Heart left ventricle (tissue), 16 donors: ENCODE measurements at regions of chr15 and their contacts with region 1.

Region 1: DNA sequence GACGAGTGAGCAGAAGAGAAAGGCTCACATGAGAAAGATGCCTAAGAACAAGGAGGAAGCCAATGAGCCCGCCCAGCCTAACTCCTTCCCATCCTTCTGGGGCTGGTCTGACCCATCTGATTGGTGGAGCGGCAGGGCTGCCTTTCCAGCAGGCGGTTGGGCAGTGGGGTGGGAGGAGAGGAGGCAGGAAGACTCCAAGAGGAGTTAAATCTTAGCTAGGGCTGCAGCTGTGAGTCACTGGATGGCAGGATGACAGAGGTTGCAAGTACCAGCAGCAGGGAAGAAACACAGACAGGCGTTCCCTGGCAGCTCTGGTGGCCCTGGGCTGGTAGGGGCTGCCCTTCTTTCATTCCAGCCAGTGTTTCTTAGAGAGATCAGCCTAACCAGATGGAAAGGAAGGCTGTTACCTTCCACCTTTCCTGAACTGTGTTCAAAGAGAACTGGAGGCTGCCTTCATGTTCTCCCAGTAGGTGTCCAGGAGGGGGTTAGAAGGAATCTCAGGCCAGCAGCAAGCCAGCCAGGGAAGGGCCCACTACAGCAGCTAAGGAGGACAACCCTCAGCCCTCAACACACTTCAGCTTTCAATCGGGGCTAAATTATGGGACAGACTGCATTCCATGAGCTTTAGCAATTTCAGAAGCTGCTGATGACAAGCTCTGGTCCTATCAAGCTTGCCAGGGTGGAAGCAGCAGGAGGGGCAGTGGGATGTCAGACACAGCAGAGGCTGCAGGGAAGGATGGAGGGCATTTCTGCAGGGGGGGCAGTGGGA is 50.3 kb downstream of the CHSY1 start:
- DNase-seq: peak; percentile 84 to 93 (median 91)
- ATAC-seq: peak; percentile 89 to 96 (median 94)
- H3K4me3 ChIP-seq: no peak overlapping the region
- H3K27ac ChIP-seq: peak overlapping the region in 9 of 12 donors; percentile 37 to 85 (median 58)
- H3K4me1 ChIP-seq: peaks cover 3 to 86% (median 57%) of the 10 kb centered on the region in 12 donors
- H3K27me3 ChIP-seq: no peaks in the 10 kb centered on the region
- CTCF ChIP-seq: no peak
- POLR2A ChIP-seq: peak in 1 of 2 donors; percentile 49

Region 2: DNA sequence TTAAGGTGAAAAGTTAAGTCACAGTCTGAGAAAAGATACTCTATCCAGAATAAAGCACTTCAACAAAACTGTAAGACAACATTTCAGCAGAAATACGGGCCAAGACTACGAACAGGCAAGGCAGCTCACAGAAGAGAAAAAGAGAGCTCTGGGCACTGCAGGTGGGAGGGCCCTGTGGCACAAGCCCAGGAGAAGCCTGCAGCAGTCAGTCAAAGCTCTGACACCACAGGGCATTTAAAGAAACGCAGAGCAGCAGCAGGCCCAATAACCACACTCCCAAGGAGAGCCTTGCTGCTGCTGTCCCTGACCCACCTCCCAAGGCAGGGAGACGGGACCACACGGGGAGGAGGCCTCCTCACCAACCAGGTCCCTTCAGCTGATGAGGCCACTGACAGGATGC is 31.1 kb after region 1 on chr15:
- intact Hi-C with region 1: loop called in 1 of 10 experiments (anchors 5 kb)
- DNase-seq: no peak
- ATAC-seq: peak; percentile 61 to 93 (median 84)
- H3K4me3 ChIP-seq: no peak overlapping the region
- H3K27ac ChIP-seq: peak overlapping the region in 1 of 12 donors; percentile 9
- H3K4me1 ChIP-seq: peaks cover 0 to 58% (median 14%) of the 10 kb centered on the region in 12 donors
- H3K27me3 ChIP-seq: no peaks in the 10 kb centered on the region
- CTCF ChIP-seq: no peak
- POLR2A ChIP-seq: no peak